ENCODE measurements at regions of chr19 and their contacts with region 1.

Region 1: GRCh38 chr19:40633207-40633606 is 32.0 kb downstream of the LTBP4 start:
- DNase-seq: no peak
- H3K4me3 ChIP-seq: no peak overlapping the region
- H3K27ac ChIP-seq: no peak overlapping the region
- H3K4me1 ChIP-seq: peaks cover 0 to 9% (median 4%) of the 10 kb centered on the region in 4 experiments; a peak in 5 of 7 replicates
- H3K27me3 ChIP-seq: peaks cover 0 to 13% (median 8%) of the 10 kb centered on the region in 4 experiments; a peak in 3 of 7 replicates
- CTCF ChIP-seq: no peak
- EP300 ChIP-seq: no peak
- POLR2A ChIP-seq: no peak
- RAD21 ChIP-seq: no peak

Region 2: DNA sequence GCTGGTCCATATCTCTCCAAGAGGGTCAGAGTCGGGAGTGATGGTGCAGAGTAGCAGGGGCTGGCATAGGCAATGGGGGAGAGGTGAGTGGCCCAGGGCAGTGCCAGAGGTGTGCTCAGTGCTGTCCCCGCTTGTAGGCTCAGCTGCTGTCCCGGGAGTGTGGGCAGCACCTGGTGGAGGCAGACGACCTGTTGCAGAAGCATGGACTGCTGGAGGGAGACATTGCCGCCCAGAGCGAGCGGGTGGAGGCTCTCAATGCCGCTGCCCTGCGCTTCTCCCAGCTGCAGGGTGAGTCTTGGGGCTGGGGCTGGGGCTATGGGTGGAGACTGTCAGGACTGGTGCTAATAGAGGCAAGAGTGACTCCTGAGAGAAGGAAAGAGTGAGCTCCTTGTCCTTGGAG is 127.1 kb before region 1 on chr19:
- CTCF ChIA-PET with region 1: no interaction called
- POLR2A ChIA-PET with region 1: no interaction called
- DNase-seq: no peak
- H3K4me3 ChIP-seq: no peak overlapping the region
- H3K27ac ChIP-seq: no peak overlapping the region
- H3K4me1 ChIP-seq: no peaks in the 10 kb centered on the region
- H3K27me3 ChIP-seq: peaks cover 0 to 11% (median 8%) of the 10 kb centered on the region in 4 experiments; a peak in 4 of 7 replicates
- CTCF ChIP-seq: no peak
- EP300 ChIP-seq: no peak
- POLR2A ChIP-seq: no peak
- RAD21 ChIP-seq: no peak

Region 3: GRCh38 chr19:40523322-40524047 is 109.7 kb before region 1 on chr19:
- CTCF ChIA-PET with region 1: interaction called, 13 read pairs
- POLR2A ChIA-PET with region 1: no interaction called
- DNase-seq: peak in 1 of 2 experiments; percentile 87
- H3K4me3 ChIP-seq: no peak overlapping the region
- H3K27ac ChIP-seq: no peak overlapping the region
- H3K4me1 ChIP-seq: peaks cover 0 to 4% (median 1%) of the 10 kb centered on the region in 4 experiments; a peak in 3 of 7 replicates
- H3K27me3 ChIP-seq: peaks cover 17 to 32% (median 27%) of the 10 kb centered on the region in 4 experiments
- CTCF ChIP-seq: peak; percentile 91 to 99 (median 98)
- EP300 ChIP-seq: no peak
- POLR2A ChIP-seq: no peak
- RAD21 ChIP-seq: peak; percentile 67 to 78

Region 4: DNA sequence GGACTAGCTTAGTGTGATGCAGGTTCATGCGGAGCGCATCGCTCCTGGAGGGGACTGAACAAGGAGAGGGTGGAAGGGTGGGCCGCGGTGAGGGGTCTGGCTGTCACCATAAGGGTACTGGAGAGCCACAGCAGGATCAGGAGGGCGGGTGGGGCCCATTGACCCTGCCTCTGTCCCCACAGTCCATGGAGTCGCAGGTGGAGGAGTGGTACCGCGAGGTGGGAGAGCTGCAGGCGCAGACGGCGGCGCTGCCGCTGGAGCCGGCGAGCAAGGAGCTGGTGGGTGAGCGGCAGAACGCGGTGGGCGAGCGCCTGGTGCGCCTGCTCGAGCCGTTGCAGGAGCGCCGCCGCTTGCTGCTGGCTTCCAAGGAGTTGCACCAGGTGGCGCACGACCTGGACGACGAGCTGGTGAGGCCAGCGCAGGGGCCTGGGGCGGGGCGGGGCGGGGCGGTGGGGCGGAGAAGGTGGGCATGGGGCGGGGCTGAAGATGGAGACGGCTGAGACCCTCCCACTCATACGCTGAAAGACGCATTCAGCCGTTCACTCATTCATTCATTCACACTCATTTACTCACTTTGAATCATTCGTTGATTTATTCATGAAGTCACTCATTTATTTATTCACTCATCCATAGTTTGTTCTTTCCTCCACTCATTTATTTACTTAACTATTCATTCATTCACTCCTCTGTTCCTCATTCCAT is 84.0 kb before region 1 on chr19:
- CTCF ChIA-PET with region 1: interaction called, 36 read pairs
- POLR2A ChIA-PET with region 1: interaction called, 4 read pairs
- DNase-seq: peak; percentile 73 to 92
- H3K4me3 ChIP-seq: peak overlapping the region in 3 of 4 experiments; percentile 31 to 49 (median 40); a peak in 7 of 8 replicates
- H3K27ac ChIP-seq: no peak overlapping the region
- H3K4me1 ChIP-seq: peaks cover 0 to 1% (median 0%) of the 10 kb centered on the region in 4 experiments; a peak in 3 of 7 replicates
- H3K27me3 ChIP-seq: peaks cover 0 to 26% (median 24%) of the 10 kb centered on the region in 4 experiments; a peak in 6 of 7 replicates
- CTCF ChIP-seq: peak; percentile 66 to 81 (median 80)
- EP300 ChIP-seq: no peak
- POLR2A ChIP-seq: no peak
- RAD21 ChIP-seq: peak; percentile 45 to 59

Region 5: GRCh38 chr19:40553885-40554857 is 79.0 kb before region 1 on chr19:
- CTCF ChIA-PET with region 1: interaction called, 36 read pairs
- POLR2A ChIA-PET with region 1: no interaction called
- DNase-seq: peak in 1 of 2 experiments; percentile 76
- H3K4me3 ChIP-seq: peak overlapping the region in 1 of 4 experiments; percentile 49; a peak in 3 of 8 replicates
- H3K27ac ChIP-seq: no peak overlapping the region
- H3K4me1 ChIP-seq: peaks cover 0 to 5% (median 2%) of the 10 kb centered on the region in 4 experiments; a peak in 4 of 7 replicates
- H3K27me3 ChIP-seq: peaks cover 7 to 40% (median 36%) of the 10 kb centered on the region in 4 experiments
- CTCF ChIP-seq: peak in 1 of 3 experiments; percentile 32; a peak in 2 of 4 replicates
- EP300 ChIP-seq: no peak
- POLR2A ChIP-seq: no peak
- RAD21 ChIP-seq: peak in 1 of 2 experiments; percentile 26; a peak in 2 of 4 replicates

Region 6: GRCh38 chr19:40576585-40577451 is 56.4 kb before region 1 on chr19 and contains the start of gene SHKBP1:
- CTCF ChIA-PET with region 1: interaction called, 12 read pairs
- POLR2A ChIA-PET with region 1: no interaction called
- DNase-seq: peak; percentile 80 to 97
- H3K4me3 ChIP-seq: peak within 1 kb of the TSS; percentile 67 to 96 (median 80)
- H3K27ac ChIP-seq: peak within 1 kb of the TSS; percentile 69
- H3K4me1 ChIP-seq: peaks cover 2 to 8% (median 5%) of the 10 kb centered on the region in 4 experiments; a peak in 6 of 7 replicates
- H3K27me3 ChIP-seq: no peaks in the 10 kb centered on the region
- CTCF ChIP-seq: no peak
- EP300 ChIP-seq: no peak
- POLR2A ChIP-seq: no peak; a peak in 1 of 3 replicates
- RAD21 ChIP-seq: no peak
- total RNA-seq, gene SHKBP1: 72.8 and 74.6 TPM in 2 replicates

Region 7: GRCh38 chr19:40614622-40615411 is 18.4 kb before region 1 on chr19:
- CTCF ChIA-PET with region 1: interaction called, 29 read pairs
- POLR2A ChIA-PET with region 1: interaction called, 5 read pairs
- DNase-seq: peak in 1 of 2 experiments; percentile 93
- H3K4me3 ChIP-seq: peak overlapping the region; percentile 71 to 94 (median 86)
- H3K27ac ChIP-seq: 0 out of 2 replicates have a peak overlapping the region, but pooled peaks have one; percentile 35
- H3K4me1 ChIP-seq: peaks cover 3 to 13% (median 7%) of the 10 kb centered on the region in 4 experiments; a peak in 6 of 7 replicates
- H3K27me3 ChIP-seq: peaks cover 2 to 26% (median 25%) of the 10 kb centered on the region in 4 experiments
- CTCF ChIP-seq: no peak
- EP300 ChIP-seq: no peak
- POLR2A ChIP-seq: no peak
- RAD21 ChIP-seq: no peak

Region 8: GRCh38 chr19:40650749-40651305 is 17.6 kb after region 1 on chr19:
- CTCF ChIA-PET with region 1: interaction called, 41 read pairs
- POLR2A ChIA-PET with region 1: interaction called, 3 read pairs
- DNase-seq: no peak
- H3K4me3 ChIP-seq: no peak overlapping the region
- H3K27ac ChIP-seq: no peak overlapping the region
- H3K4me1 ChIP-seq: no peaks in the 10 kb centered on the region
- H3K27me3 ChIP-seq: no peaks in the 10 kb centered on the region
- CTCF ChIP-seq: no peak
- EP300 ChIP-seq: no peak
- POLR2A ChIP-seq: no peak
- RAD21 ChIP-seq: no peak

Region 9: DNA sequence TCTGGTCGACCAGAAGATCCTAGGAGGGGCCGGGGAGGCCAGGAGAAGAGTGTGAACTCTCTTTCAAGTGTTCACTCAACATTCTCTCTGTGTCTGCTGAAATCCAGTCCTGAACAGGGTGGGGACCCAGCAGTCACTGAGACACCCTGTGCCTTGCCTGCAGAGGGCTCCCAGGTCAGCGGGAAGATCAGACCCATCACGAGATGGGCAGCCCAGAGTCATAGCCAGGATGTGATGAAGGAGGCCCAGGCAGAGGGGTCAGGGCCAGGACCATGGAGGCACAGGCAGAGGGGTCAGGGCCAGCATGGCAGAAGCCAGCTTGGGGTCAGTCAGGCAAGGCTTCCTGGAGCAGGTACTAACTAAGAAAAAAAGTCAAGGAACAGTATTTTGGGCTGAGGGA is 47.8 kb after region 1 on chr19:
- CTCF ChIA-PET with region 1: no interaction called
- POLR2A ChIA-PET with region 1: no interaction called
- DNase-seq: no peak
- H3K4me3 ChIP-seq: no peak overlapping the region
- H3K27ac ChIP-seq: no peak overlapping the region
- H3K4me1 ChIP-seq: no peaks in the 10 kb centered on the region
- H3K27me3 ChIP-seq: no peaks in the 10 kb centered on the region
- CTCF ChIP-seq: no peak
- EP300 ChIP-seq: no peak
- POLR2A ChIP-seq: no peak
- RAD21 ChIP-seq: no peak

Measured in H1 (cell line).